Heart right ventricle (tissue), 16 donors: ENCODE measurements at regions of chr6 and their contacts with region 1.

Region 1: GRCh38 chr6:81075974-81076373 is 676.5 kb downstream of the TENT5A start:
- DNase-seq: no peak
- ATAC-seq: no peak
- H3K4me3 ChIP-seq: no peak overlapping the region
- H3K27ac ChIP-seq: no peak overlapping the region
- H3K4me1 ChIP-seq: no peaks in the 10 kb centered on the region
- H3K27me3 ChIP-seq: no peaks in the 10 kb centered on the region
- CTCF ChIP-seq: peak in 8 of 9 donors; percentile 13 to 55 (median 44)

Region 2: DNA sequence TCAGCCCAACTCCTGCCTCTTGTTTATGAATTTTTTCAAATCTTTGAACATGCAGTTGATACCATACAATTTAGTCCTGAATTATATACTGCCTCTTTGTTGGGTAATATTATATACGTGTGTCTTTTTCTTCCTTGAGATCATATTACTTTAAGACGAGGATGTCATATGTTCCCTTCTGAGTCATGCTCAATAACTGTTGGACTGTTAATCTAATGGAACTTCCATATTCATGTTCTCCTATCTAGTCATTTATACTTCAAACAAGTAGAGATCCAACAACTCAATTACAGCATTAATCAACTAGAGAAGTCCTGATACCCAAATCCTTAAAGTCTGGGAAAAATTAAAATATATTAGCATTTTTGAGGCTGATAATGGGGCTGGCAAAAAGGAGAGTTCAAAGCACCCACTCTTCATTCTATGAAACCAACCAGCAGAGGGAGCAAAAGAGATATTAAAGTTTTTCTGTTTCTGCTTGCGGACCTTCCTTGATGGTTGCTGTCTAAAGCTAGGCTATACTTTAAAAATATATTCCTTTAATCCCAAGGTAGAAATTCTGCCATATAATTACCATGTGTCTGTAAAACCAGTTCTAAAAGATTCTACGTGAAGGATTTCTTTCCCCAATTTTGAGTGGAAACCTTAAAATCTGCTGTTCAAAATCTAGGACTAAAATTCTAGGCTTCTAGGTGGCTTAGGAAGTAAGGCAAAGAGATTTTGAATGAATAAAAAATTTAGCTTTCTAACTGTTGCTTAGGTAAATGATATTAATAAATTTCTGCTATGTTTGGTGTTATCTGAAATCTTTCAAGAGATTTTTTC is 470.6 kb before region 1 on chr6:
- intact Hi-C with region 1: loop called in 1 of 10 experiments (anchors 10 kb)
- DNase-seq: peak in 1 of 2 donors; percentile 10
- ATAC-seq: peak in 2 of 8 donors; percentile 52 to 70
- H3K4me3 ChIP-seq: no peak overlapping the region
- H3K27ac ChIP-seq: no peak overlapping the region
- H3K4me1 ChIP-seq: peaks cover 0 to 21% (median 4%) of the 10 kb centered on the region in 9 donors
- H3K27me3 ChIP-seq: no peaks in the 10 kb centered on the region
- CTCF ChIP-seq: peak in 7 of 9 donors; percentile 54 to 69 (median 63)

Region 3: DNA sequence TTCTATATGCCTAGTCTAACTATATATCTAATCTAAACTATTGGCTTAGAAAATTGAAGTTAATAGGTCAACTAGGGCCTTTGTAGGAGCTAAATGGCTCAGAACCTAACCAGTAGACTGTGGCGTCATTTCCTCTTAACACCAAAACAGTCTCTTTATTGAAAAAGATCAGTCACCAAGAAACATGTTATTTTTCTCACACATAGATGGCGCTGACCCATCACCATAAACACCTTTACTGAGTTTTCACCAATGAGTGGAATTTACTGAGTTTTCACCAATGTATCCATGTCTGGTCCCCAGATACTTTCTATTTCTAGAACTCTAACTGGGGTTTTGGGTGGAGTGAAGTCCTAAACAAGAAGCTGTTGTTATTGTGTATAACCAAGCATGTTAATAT is 333.5 kb before region 1 on chr6:
- intact Hi-C with region 1: loop called in 1 of 10 experiments (anchors 5 kb)
- DNase-seq: no peak
- ATAC-seq: peak in 2 of 8 donors; percentile 35 to 49
- H3K4me3 ChIP-seq: no peak overlapping the region
- H3K27ac ChIP-seq: no peak overlapping the region
- H3K4me1 ChIP-seq: no peaks in the 10 kb centered on the region
- H3K27me3 ChIP-seq: no peaks in the 10 kb centered on the region
- CTCF ChIP-seq: peak in 7 of 9 donors; percentile 16 to 55 (median 45)